ENCODE measurements at regions of chr12 and their contacts with region 1.

Region 1: GRCh38 chr12:46153268-46153872 is 115.5 kb downstream of the SLC38A1 start:
- DNase-seq: no peak
- ATAC-seq: no peak
- H3K4me3 Mint-ChIP-seq: peak overlapping the region; percentile 4
- H3K27ac Mint-ChIP-seq: no peak overlapping the region
- H3K4me1 Mint-ChIP-seq: peaks cover 35% of the 10 kb centered on the region
- H3K27me3 Mint-ChIP-seq: peaks cover 1% of the 10 kb centered on the region
- CTCF ChIP-seq: no peak

Region 2: DNA sequence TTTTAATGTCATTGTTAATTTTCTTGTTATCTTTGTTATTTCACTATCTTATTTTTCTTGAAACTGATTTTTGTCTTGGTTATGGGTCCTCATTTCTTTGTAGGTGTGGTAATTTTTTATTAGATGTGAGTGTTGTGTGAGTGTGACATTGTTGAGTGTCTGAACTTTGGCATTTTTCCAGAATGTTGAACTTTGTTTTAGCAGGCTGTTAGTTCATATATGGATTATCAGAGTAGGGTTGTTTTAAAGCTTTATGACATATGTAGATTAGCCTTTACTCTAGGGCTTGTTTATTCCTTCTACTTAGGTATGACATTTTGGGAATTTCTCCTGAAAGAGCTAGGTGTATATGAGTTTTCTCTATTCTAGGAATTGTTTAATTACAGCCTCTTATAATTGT is 320.0 kb before region 1 on chr12:
- CTCF ChIA-PET with region 1: no interaction called
- POLR2A ChIA-PET with region 1: no interaction called
- intact Hi-C with region 1: no loop called
- DNase-seq: no peak
- ATAC-seq: no peak
- H3K4me3 Mint-ChIP-seq: no peak overlapping the region
- H3K27ac Mint-ChIP-seq: no peak overlapping the region
- H3K4me1 Mint-ChIP-seq: peaks cover 2% of the 10 kb centered on the region
- H3K27me3 Mint-ChIP-seq: no peaks in the 10 kb centered on the region
- CTCF ChIP-seq: no peak

Region 3: DNA sequence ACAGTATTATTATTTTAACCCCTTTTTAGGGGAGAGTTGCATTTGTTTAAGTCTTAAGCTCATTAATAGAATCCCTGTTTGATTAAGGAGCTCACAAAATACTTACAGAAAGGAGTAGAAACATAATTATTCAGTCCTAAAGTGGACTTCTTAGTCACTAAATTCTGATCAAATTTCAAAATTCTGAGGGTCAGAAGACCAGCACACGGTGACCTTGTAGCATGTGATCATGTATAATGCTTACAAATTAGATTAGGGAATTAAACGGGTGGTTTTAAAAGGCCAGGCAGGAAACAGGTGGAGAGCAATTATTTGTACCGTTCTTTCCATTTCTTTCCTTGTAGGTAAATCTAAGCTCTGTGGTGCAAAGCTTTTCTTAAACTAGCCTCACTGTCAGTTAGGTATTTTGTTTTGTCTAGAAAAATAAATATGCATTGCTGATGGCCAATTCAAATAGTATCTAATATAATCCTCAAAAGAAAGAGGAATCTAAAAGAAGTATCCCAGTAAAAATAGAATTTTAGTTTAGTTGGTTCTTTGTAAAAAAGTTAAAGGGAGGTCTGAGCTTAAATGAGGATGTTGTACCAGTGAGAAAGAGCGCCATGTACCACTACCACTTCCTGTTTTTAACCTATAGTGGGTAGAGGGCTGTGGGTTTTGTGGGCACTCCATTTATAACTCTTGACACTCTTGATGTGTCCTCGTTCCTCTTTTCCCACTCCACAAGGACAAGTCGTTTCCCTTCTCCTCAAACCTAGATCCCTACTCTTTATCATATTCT is 64.4 kb after region 1 on chr12:
- CTCF ChIA-PET with region 1: no interaction called
- POLR2A ChIA-PET with region 1: interaction called, 10 read pairs
- intact Hi-C with region 1: no loop called
- DNase-seq: no peak
- ATAC-seq: peak; percentile 63
- H3K4me3 Mint-ChIP-seq: peak overlapping the region; percentile 49
- H3K27ac Mint-ChIP-seq: peak overlapping the region; percentile 98
- H3K4me1 Mint-ChIP-seq: peaks cover 97% of the 10 kb centered on the region
- H3K27me3 Mint-ChIP-seq: no peaks in the 10 kb centered on the region
- CTCF ChIP-seq: no peak

Region 4: DNA sequence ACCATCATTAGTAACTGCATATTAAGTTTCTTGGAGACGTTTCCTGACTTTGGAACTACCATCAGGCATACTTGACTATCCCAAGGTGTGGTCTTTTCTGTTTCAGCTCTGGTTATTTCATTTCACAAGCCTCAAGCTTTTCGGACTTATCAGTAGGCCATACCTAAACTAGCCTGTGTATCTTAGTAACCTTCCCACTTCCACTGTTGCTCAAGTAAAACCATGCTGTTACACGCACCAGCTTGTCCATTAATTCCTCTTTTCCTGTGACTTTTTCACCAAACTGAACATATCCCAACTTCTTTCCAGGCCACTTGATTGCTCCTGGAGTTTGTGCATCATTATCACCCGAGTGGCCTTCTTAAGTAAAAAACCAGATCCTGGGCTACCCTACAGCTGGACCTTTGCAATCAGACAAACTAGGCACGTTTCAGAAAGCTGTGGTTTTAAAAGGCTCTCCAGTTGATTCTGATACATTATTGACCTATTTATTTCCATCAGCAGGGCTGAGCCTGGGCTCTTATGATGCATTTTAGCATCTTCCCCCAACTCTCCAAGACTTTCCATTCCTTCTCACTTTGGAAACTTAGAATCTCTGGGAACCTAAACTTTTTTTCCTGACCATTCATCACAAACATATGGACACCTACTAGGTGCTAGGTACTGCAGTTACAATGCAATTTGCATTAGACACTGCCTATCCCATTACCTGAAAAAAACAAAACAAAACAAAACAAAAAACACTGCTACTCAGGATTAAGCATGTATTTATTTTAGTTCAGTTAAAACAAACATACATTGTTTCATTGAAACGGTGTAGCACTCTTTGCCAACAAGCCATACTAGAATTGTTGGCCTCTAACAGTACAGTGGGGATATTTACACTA is 204.3 kb after region 1 on chr12:
- CTCF ChIA-PET with region 1: no interaction called
- POLR2A ChIA-PET with region 1: no interaction called
- intact Hi-C with region 1: loop called (anchors 2 kb)
- DNase-seq: no peak
- ATAC-seq: no peak
- H3K4me3 Mint-ChIP-seq: no peak overlapping the region
- H3K27ac Mint-ChIP-seq: no peak overlapping the region
- H3K4me1 Mint-ChIP-seq: peaks cover 32% of the 10 kb centered on the region
- H3K27me3 Mint-ChIP-seq: no peaks in the 10 kb centered on the region
- CTCF ChIP-seq: no peak

Region 5: DNA sequence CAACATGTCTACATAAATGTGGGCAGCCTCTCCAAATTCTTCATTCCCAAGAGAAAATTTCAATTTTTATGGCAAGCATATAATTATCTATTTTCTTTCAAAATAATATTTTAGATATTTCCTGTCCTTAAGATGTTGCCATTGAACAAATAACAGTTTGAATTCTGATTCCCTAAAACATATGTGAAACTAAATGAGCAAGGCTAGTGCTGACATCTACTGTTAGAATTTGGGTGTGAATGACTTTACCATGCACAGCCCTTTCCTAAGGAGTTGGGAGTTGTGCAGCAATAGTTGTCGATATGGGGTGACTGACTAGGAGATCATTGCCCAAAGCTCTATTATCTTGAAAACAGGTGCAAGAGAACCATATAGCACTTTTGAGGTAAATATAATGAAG is 780.6 kb after region 1 on chr12:
- CTCF ChIA-PET with region 1: no interaction called
- POLR2A ChIA-PET with region 1: interaction called, 3 read pairs
- intact Hi-C with region 1: loop called (anchors 10 kb)
- DNase-seq: no peak
- ATAC-seq: no peak
- H3K4me3 Mint-ChIP-seq: no peak overlapping the region
- H3K27ac Mint-ChIP-seq: no peak overlapping the region
- H3K4me1 Mint-ChIP-seq: no peaks in the 10 kb centered on the region
- H3K27me3 Mint-ChIP-seq: peaks cover 17% of the 10 kb centered on the region
- CTCF ChIP-seq: no peak